ENCODE measurements at regions of chr7 and their contacts with region 1.

Region 1: DNA sequence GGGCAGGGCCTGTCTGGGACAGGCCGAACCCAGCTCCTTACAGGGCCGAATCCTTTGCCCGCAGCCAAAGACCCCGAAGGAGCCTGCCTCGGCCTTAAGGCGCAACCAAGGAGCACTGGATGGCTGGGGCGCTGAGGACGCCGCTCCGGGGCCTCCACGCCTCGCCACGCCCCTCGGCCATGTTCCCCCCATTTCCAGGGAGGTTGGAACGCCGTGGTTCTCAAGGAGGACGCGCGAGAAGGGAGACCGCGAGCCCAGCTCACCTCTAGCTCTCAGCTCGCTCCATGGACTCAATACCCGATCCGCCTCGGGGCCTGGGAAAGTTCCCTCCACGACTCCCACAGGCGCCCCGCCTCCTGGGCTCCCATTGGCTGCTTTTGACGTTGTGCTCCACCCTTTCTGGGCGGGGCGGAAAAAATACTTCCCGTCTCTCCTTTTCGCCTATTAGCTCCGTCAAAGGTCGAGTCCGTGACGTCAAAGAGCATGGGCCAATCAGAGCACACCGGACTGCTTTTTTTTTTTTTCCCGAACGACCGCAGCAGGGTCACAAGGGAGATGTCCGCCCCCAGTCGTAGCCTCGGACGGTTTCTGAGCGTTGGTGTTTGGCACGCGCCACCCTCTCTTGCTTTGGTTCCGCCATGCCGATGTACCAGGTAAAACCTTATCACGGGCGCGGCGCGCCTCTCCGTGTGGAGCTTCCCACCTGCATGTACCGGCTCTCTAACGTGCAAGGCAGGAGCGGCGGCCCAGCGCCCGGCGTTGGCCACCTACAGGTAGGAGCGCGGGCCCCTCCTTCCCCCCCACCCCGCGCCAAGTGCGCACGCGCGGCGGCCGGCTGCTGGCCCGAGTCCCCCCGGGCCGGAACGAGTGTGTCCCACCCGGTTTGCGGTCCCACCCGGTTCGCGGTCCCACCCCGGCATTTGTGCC is 305.7 kb downstream of the TYW1 start:
- DNase-seq: peak; percentile 99
- H3K4me3 ChIP-seq: peak overlapping the region; percentile 79
- H3K4me3 Mint-ChIP-seq: peak overlapping the region; percentile 85
- H3K27ac Mint-ChIP-seq: peak overlapping the region; percentile 96
- H3K4me1 ChIP-seq: no peaks in the 10 kb centered on the region
- H3K4me1 Mint-ChIP-seq: peaks cover 6% of the 10 kb centered on the region
- H3K27me3 ChIP-seq: no peaks in the 10 kb centered on the region
- H3K27me3 Mint-ChIP-seq: no peaks in the 10 kb centered on the region
- CTCF ChIP-seq: peak; percentile 31 to 43

Region 2: GRCh38 chr7:66681491-66682349 is 620.7 kb before region 1 on chr7:
- CTCF ChIA-PET with region 1: no interaction called
- POLR2A ChIA-PET with region 1: interaction called, 10 read pairs
- intact Hi-C with region 1: no loop called
- DNase-seq: peak; percentile 93 to 95
- H3K4me3 ChIP-seq: peak overlapping the region; percentile 100
- H3K4me3 Mint-ChIP-seq: peak overlapping the region; percentile 96
- H3K27ac Mint-ChIP-seq: peak overlapping the region; percentile 98
- H3K4me1 ChIP-seq: peaks cover 13% of the 10 kb centered on the region; the same call in 1 of the 2 replicates
- H3K4me1 Mint-ChIP-seq: peaks cover 8% of the 10 kb centered on the region
- H3K27me3 ChIP-seq: no peaks in the 10 kb centered on the region
- H3K27me3 Mint-ChIP-seq: no peaks in the 10 kb centered on the region
- CTCF ChIP-seq: no peak

Region 3: DNA sequence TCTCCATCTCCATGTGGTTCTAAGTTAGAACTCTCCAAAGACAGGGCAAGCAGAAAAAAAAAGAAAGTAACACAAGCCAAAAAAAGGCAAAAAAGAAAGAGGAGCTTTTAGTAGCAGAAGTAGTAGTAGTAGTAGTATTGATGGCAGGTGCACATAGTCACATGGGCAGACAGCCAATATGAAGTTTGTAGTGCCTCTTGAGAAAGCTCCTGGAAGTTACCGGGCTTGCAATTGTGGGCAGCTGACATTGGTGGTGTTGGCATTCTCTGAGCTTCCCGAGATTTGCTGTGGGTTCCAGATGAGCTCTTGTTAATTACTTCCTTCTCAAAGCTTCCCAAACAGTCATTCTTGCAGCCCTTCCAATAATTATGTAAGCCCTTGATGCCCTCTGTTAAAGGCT is 822.8 kb after region 1 on chr7:
- CTCF ChIA-PET with region 1: no interaction called
- POLR2A ChIA-PET with region 1: no interaction called
- intact Hi-C with region 1: no loop called
- DNase-seq: no peak
- H3K4me3 ChIP-seq: no peak overlapping the region
- H3K4me3 Mint-ChIP-seq: no peak overlapping the region
- H3K27ac Mint-ChIP-seq: no peak overlapping the region
- H3K4me1 ChIP-seq: no peaks in the 10 kb centered on the region
- H3K4me1 Mint-ChIP-seq: no peaks in the 10 kb centered on the region
- H3K27me3 ChIP-seq: no peaks in the 10 kb centered on the region
- H3K27me3 Mint-ChIP-seq: no peaks in the 10 kb centered on the region
- CTCF ChIP-seq: no peak

Measured in Caco-2 (cell line).